ENCODE measurements at regions of chr16 and their contacts with region 1.

Region 1: DNA sequence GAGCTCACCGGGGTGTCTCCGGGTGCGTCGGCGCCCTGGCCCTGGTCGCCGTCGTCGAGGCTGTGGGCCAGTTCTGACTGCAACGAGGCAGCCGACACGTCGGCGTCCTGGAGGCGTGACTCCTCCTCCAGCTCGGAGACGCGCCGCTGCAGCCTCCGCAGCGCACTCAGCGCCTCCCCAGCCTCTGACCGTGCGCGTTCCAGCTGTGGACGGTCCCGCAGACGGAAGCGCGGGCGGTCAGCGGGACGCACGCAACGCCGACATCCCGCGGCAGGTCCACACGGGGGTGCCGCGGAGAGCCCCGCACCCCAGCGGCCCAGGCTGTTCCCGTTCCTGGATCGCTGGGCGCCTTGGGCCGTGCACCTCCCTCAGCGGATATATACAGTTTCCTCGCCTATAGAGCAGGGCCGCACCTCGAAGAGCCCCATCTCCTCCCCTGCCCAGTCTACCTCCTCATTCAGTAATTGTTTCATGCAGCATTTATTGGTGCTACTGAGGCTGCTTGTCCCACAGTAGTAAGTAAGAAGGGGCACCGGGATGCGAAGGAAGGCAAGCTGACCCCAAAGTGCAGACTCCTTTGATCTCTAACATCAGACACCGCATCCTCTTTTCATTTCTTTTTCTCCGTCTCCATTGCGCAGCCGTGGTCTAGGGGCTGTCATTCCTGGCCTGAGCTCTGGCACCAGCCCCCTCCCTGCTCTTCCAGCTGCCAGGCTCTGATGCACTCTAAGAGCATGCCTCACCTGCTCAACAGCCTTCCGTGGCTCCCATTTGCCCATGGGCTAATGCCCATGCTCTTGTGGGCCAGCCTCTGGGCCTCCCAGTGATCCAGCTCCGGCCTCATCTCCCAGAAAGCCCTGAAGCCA is 5.9 kb downstream of the THOC6 start:
- DNase-seq: peak in 1 of 2 experiments; percentile 41
- H3K4me3 ChIP-seq: no peak overlapping the region
- H3K27ac ChIP-seq: no peak overlapping the region
- H3K4me1 ChIP-seq: peaks cover 0 to 8% (median 6%) of the 10 kb centered on the region in 4 experiments; a peak in 5 of 7 replicates
- H3K27me3 ChIP-seq: no peaks in the 10 kb centered on the region
- CTCF ChIP-seq: no peak
- EP300 ChIP-seq: no peak
- POLR2A ChIP-seq: no peak
- RAD21 ChIP-seq: no peak

Region 2: GRCh38 chr16:2987839-2988238 is 41.9 kb before region 1 on chr16:
- CTCF ChIA-PET with region 1: interaction called, 11 read pairs
- POLR2A ChIA-PET with region 1: interaction called, 455 read pairs
- DNase-seq: no peak
- H3K4me3 ChIP-seq: no peak overlapping the region
- H3K27ac ChIP-seq: no peak overlapping the region
- H3K4me1 ChIP-seq: peaks cover 3 to 28% (median 23%) of the 10 kb centered on the region in 4 experiments
- H3K27me3 ChIP-seq: no peaks in the 10 kb centered on the region; a peak in 1 of 7 replicates
- CTCF ChIP-seq: no peak
- EP300 ChIP-seq: no peak
- POLR2A ChIP-seq: no peak
- RAD21 ChIP-seq: no peak

Region 3: GRCh38 chr16:3045357-3045728 is 15.6 kb after region 1 on chr16:
- CTCF ChIA-PET with region 1: interaction called, 117 read pairs
- POLR2A ChIA-PET with region 1: interaction called, 1,808 read pairs
- DNase-seq: peak in 1 of 2 experiments; percentile 73
- H3K4me3 ChIP-seq: peak overlapping the region; percentile 66 to 89 (median 80)
- H3K27ac ChIP-seq: no peak overlapping the region; the same call in 1 of the 2 replicates
- H3K4me1 ChIP-seq: peaks cover 0 to 3% (median 0%) of the 10 kb centered on the region in 4 experiments; a peak in 3 of 7 replicates
- H3K27me3 ChIP-seq: peaks cover 0 to 8% (median 3%) of the 10 kb centered on the region in 4 experiments; a peak in 6 of 7 replicates
- CTCF ChIP-seq: no peak
- EP300 ChIP-seq: no peak
- POLR2A ChIP-seq: no peak
- RAD21 ChIP-seq: no peak

Region 4: GRCh38 chr16:3065069-3065741 is 35.4 kb after region 1 on chr16 and contains the start of gene IL32:
- CTCF ChIA-PET with region 1: interaction called, 88 read pairs
- POLR2A ChIA-PET with region 1: interaction called, 43 read pairs
- DNase-seq: no peak
- H3K4me3 ChIP-seq: no peak within 1 kb of the TSS
- H3K27ac ChIP-seq: peak within 1 kb of the TSS; percentile 23; the same call in 1 of the 2 replicates
- H3K4me1 ChIP-seq: peaks cover 0 to 3% (median 1%) of the 10 kb centered on the region in 4 experiments; a peak in 2 of 7 replicates
- H3K27me3 ChIP-seq: no peaks in the 10 kb centered on the region
- CTCF ChIP-seq: no peak
- EP300 ChIP-seq: no peak
- POLR2A ChIP-seq: no peak
- RAD21 ChIP-seq: no peak
- total RNA-seq, gene IL32: 2.0 and 2.7 TPM in 2 replicates

Region 5: GRCh38 chr16:3074860-3075522 is 45.2 kb after region 1 on chr16:
- CTCF ChIA-PET with region 1: interaction called, 19 read pairs
- POLR2A ChIA-PET with region 1: interaction called, 6 read pairs
- DNase-seq: no peak
- H3K4me3 ChIP-seq: no peak overlapping the region
- H3K27ac ChIP-seq: no peak overlapping the region
- H3K4me1 ChIP-seq: peaks cover 0 to 2% (median 0%) of the 10 kb centered on the region in 4 experiments; a peak in 2 of 7 replicates
- H3K27me3 ChIP-seq: no peaks in the 10 kb centered on the region; a peak in 1 of 7 replicates
- CTCF ChIP-seq: no peak
- EP300 ChIP-seq: no peak
- POLR2A ChIP-seq: no peak
- RAD21 ChIP-seq: no peak

Region 6: GRCh38 chr16:3118204-3118806 is 88.5 kb after region 1 on chr16:
- CTCF ChIA-PET with region 1: interaction called, 18 read pairs
- POLR2A ChIA-PET with region 1: interaction called, 5 read pairs
- DNase-seq: no peak
- H3K4me3 ChIP-seq: no peak overlapping the region
- H3K27ac ChIP-seq: no peak overlapping the region
- H3K4me1 ChIP-seq: peaks cover 0 to 8% (median 4%) of the 10 kb centered on the region in 4 experiments; a peak in 5 of 7 replicates
- H3K27me3 ChIP-seq: no peaks in the 10 kb centered on the region
- CTCF ChIP-seq: no peak
- EP300 ChIP-seq: no peak
- POLR2A ChIP-seq: no peak
- RAD21 ChIP-seq: no peak

Measured in H1 (cell line).